ENCODE measurements at regions of chr1 and their contacts with region 1.

Region 1: GRCh38 chr1:46699666-46700065 is 19.2 kb downstream of the EFCAB14 start:
- DNase-seq: no peak
- H3K4me3 ChIP-seq: no peak overlapping the region
- CTCF ChIP-seq: no peak

Region 2: GRCh38 chr1:46667782-46668760 is 31.6 kb before region 1 on chr1 and contains the start of gene ATPAF1:
- in situ Hi-C with region 1: loop called (anchors 5 kb)
- DNase-seq: peak; percentile 11
- H3K4me3 ChIP-seq: peak within 1 kb of the TSS; percentile 74
- CTCF ChIP-seq: no peak